Sigmoid colon (tissue), 7 donors: ENCODE measurements at regions of chr19 and their contacts with region 1.

Region 1: DNA sequence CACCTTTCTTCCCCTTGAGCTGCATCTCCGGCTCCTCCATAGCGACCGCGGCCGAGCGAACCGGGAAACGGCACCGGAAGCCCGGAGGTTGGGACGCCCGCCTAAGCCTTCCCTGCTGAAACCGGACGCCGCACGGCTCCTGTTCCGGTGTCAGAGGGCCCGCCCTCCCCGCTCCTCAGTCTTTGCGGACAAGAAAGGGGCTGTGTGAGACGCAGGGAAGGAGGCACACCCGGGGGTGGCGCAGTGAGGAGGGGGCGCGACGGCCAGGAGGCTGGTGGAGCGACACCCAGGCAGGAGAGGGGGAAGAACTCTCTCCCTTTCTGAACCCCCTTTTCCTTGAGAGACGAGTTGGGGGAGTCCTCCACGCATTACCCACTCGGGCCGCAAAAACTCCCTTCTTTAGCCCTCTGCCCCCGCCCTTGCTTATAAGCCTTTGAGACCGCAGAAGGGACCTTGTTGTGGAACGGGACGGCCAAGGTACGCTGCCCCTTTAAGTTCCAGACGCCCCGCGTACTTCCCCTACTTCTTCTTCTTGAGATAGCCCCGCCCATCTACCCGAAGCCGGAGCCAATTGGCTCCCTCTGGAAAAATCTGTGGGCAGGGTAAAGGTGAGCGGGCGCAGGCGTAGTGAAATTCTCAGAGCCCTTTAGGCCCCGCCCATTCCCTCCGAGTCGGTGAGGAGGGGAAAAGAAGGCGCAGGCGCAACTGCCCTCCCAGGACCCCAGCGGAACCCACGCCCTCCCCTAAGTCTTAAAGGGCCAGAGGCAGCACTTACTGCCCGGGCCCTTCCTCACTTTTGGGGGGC is at the starts of genes BORCS8 and RFXANK:
- DNase-seq: peak; percentile 100
- H3K4me3 ChIP-seq: peak within 1 kb of the TSS; percentile 65 to 99 (median 84)
- H3K27ac ChIP-seq: peak within 1 kb of the TSS; percentile 97 to 100 (median 98)
- H3K4me1 ChIP-seq: peaks cover 0 to 55% (median 47%) of the 10 kb centered on the region in 4 donors
- H3K27me3 ChIP-seq: no peaks in the 10 kb centered on the region
- CTCF ChIP-seq: no peak
- EP300 ChIP-seq: no peak
- POLR2A ChIP-seq: peak; percentile 29 to 62
- total RNA-seq, gene BORCS8: 9.3 to 16.9 (median 11.9) TPM
- total RNA-seq, gene RFXANK: 34.2 to 56.1 (median 54.9) TPM

Region 2: GRCh38 chr19:18683213-18683939 is 508.9 kb before region 1 on chr19 and contains the start of gene CRTC1:
- intact Hi-C with region 1: loop called (anchors 5 kb)
- DNase-seq: peak; percentile 94
- H3K4me3 ChIP-seq: peak within 1 kb of the TSS; percentile 56 to 60 (median 57)
- H3K27ac ChIP-seq: peak within 1 kb of the TSS; percentile 83 to 87 (median 84)
- H3K4me1 ChIP-seq: peaks cover 0 to 23% (median 20%) of the 10 kb centered on the region in 4 donors
- H3K27me3 ChIP-seq: no peaks in the 10 kb centered on the region
- CTCF ChIP-seq: no peak
- EP300 ChIP-seq: no peak
- POLR2A ChIP-seq: peak in 1 of 2 donors; percentile 28
- total RNA-seq, gene CRTC1: 2.5 to 7.2 (median 4.6) TPM

Region 3: GRCh38 chr19:19063183-19064097 is 128.8 kb before region 1 on chr19 and contains the start of gene SLC25A42:
- intact Hi-C with region 1: loop called (anchors 5 kb)
- DNase-seq: peak; percentile 100
- H3K4me3 ChIP-seq: peak within 1 kb of the TSS; percentile 64 to 93 (median 92)
- H3K27ac ChIP-seq: peak within 1 kb of the TSS; percentile 79 to 90 (median 88)
- H3K4me1 ChIP-seq: peaks cover 0 to 28% (median 21%) of the 10 kb centered on the region in 4 donors
- H3K27me3 ChIP-seq: no peaks in the 10 kb centered on the region
- CTCF ChIP-seq: no peak
- EP300 ChIP-seq: no peak
- POLR2A ChIP-seq: peak in 1 of 2 donors; percentile 20
- total RNA-seq, gene SLC25A42: 6.3 to 8.2 (median 7.3) TPM

Region 4: GRCh38 chr19:19138169-19138981 is 53.9 kb before region 1 on chr19 and contains the start of gene TMEM161A:
- intact Hi-C with region 1: loop called (anchors 5 kb)
- DNase-seq: peak; percentile 99
- H3K4me3 ChIP-seq: peak within 1 kb of the TSS; percentile 66 to 87 (median 77)
- H3K27ac ChIP-seq: peak within 1 kb of the TSS; percentile 56 to 81 (median 75)
- H3K4me1 ChIP-seq: peaks cover 0 to 22% (median 13%) of the 10 kb centered on the region in 4 donors
- H3K27me3 ChIP-seq: no peaks in the 10 kb centered on the region
- CTCF ChIP-seq: no peak
- EP300 ChIP-seq: no peak
- POLR2A ChIP-seq: peak; percentile 38 to 52
- total RNA-seq, gene TMEM161A: 14.8 to 28.0 (median 18.3) TPM

Region 5: GRCh38 chr19:19203012-19203856 is 11.0 kb after region 1 on chr19 and contains the start of gene NR2C2AP:
- intact Hi-C with region 1: loop called (anchors 1 kb)
- DNase-seq: peak; percentile 95
- H3K4me3 ChIP-seq: peak within 1 kb of the TSS; percentile 53 to 68 (median 58)
- H3K27ac ChIP-seq: peak within 1 kb of the TSS; percentile 74 to 82 (median 78)
- H3K4me1 ChIP-seq: peaks cover 0 to 14% (median 11%) of the 10 kb centered on the region in 4 donors
- H3K27me3 ChIP-seq: peaks cover 0 to 15% (median under 1%) of the 10 kb centered on the region in 3 donors
- CTCF ChIP-seq: no peak
- EP300 ChIP-seq: no peak
- POLR2A ChIP-seq: no peak
- total RNA-seq, gene NR2C2AP: 11.1 to 23.4 (median 14.7) TPM

Region 6: GRCh38 chr19:19320362-19321142 is 128.3 kb after region 1 on chr19 and contains the starts of genes MAU2 and SUGP1:
- intact Hi-C with region 1: loop called (anchors 1 kb)
- DNase-seq: peak; percentile 92
- H3K4me3 ChIP-seq: peak within 1 kb of the TSS; percentile 86 to 100 (median 100)
- H3K27ac ChIP-seq: peak within 1 kb of the TSS; percentile 86 to 94 (median 92)
- H3K4me1 ChIP-seq: peaks cover 0 to 51% (median 34%) of the 10 kb centered on the region in 4 donors
- H3K27me3 ChIP-seq: no peaks in the 10 kb centered on the region
- CTCF ChIP-seq: peak in 3 of 4 experiments; percentile 27 to 43 (median 42)
- EP300 ChIP-seq: no peak
- POLR2A ChIP-seq: no peak
- total RNA-seq, gene MAU2: 31.0 to 94.4 (median 44.3) TPM
- total RNA-seq, gene SUGP1: 28.8 to 51.0 (median 36.8) TPM

Region 7: GRCh38 chr19:19515764-19516519 is 323.7 kb after region 1 on chr19 and contains the start of gene NDUFA13:
- intact Hi-C with region 1: loop called (anchors 10 kb)
- DNase-seq: peak; percentile 96
- H3K4me3 ChIP-seq: peak within 1 kb of the TSS; percentile 72 to 78 (median 73)
- H3K27ac ChIP-seq: peak within 1 kb of the TSS; percentile 85 to 90 (median 88)
- H3K4me1 ChIP-seq: peaks cover 0 to 52% (median 46%) of the 10 kb centered on the region in 4 donors
- H3K27me3 ChIP-seq: no peaks in the 10 kb centered on the region
- CTCF ChIP-seq: no peak
- EP300 ChIP-seq: no peak
- POLR2A ChIP-seq: peak; percentile 71 to 81
- total RNA-seq, gene NDUFA13: 31.3 to 110 (median 55.4) TPM